ENCODE measurements at regions of chr13 and their contacts with region 1.

Region 1: DNA sequence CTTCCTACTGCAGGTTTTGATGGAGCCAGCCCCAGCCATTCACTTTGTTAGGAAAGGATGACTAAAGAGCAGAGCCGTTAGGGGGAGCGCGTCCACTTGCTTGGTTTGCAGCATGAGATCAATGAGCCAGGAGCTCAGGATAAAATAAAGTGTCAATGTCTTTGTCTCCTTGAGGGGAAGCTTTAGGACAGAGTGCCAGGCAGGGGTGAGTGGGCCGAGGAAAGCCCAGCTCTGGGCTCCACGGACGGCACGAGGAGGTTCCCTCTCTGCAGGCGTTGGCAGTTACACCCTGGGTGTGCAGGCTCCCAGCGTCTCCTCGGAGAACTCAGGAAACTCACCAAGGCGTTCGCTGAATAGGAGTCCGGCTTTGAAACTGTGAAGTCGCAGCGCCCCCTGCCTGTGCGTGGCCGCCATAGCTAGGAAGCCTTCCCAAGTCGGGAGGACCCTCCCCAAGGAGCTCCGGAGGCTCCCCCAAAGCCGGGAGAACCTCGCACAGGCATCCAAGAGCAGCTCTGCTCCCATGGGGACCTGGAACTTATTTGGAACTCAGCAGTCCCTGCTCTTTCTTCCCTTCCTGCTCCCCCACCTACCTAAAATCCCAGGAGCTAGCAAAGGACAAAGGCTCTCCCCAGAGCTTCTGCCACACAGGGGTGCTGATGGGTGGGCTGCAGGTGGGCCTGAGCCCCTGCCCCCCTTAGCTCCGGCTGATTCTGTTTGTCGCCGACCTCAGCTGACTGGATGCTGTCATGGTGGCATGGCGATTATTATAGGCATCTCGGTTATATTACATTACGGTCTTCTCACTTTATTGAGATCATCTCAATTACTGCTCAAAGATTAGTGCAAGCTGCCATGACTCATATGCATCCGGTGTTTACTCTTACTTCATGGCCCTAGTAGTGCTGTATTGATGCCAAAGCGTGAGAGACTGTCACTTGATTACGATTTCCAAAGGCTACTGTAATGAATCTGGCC is 34.4 kb downstream of the GSX1 start:
- DNase-seq: no peak
- H3K4me3 ChIP-seq: peak overlapping the region in 1 of 4 donors; percentile 41
- H3K27ac ChIP-seq: no peak overlapping the region
- H3K4me1 ChIP-seq: peaks cover 0 to 18% (median 6%) of the 10 kb centered on the region in 3 donors
- H3K27me3 ChIP-seq: peaks cover 0 to 92% (median 11%) of the 10 kb centered on the region in 4 donors
- CTCF ChIP-seq: peak; percentile 85 to 96 (median 94)
- POLR2A ChIP-seq: peak in 1 of 4 donors; percentile 5

Region 2: GRCh38 chr13:26971990-26972887 is 854.4 kb before region 1 on chr13:
- intact Hi-C with region 1: loop called (anchors 10 kb)
- DNase-seq: no peak
- H3K4me3 ChIP-seq: no peak overlapping the region
- H3K27ac ChIP-seq: no peak overlapping the region
- H3K4me1 ChIP-seq: peaks cover 0 to 4% (median 0%) of the 10 kb centered on the region in 3 donors
- H3K27me3 ChIP-seq: peaks cover 0 to 53% (median 0%) of the 10 kb centered on the region in 4 donors
- CTCF ChIP-seq: peak in 3 of 6 experiments; percentile 17 to 43 (median 43)
- POLR2A ChIP-seq: no peak

Region 3: GRCh38 chr13:27374650-27375049 is 452.0 kb before region 1 on chr13:
- intact Hi-C with region 1: loop called (anchors 5 kb)
- DNase-seq: no peak
- H3K4me3 ChIP-seq: no peak overlapping the region
- H3K27ac ChIP-seq: no peak overlapping the region
- H3K4me1 ChIP-seq: no peaks in the 10 kb centered on the region
- H3K27me3 ChIP-seq: peaks cover 0 to 55% (median 1%) of the 10 kb centered on the region in 4 donors
- CTCF ChIP-seq: peak; percentile 61 to 78 (median 73)
- POLR2A ChIP-seq: no peak

Region 4: DNA sequence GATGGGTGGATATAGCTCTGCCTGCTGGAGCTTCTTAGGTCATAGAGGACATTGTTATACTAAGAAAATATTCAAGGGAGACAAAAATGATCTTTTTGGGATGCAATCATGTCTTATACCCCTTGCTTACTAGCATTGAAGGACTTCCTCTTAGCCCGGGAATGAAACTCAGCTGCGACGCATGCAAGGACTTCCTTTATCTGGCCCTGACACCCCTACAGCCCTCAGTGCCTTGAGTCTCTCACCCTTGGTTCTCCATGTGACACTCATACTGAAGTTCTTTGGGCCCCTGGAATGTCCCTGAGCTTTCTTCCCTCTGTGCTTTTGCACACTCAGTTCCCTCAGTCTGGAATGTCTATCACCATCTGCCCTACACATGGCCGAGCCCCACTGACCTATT is 303.8 kb before region 1 on chr13:
- intact Hi-C with region 1: no loop called
- DNase-seq: no peak
- H3K4me3 ChIP-seq: no peak overlapping the region
- H3K27ac ChIP-seq: no peak overlapping the region
- H3K4me1 ChIP-seq: no peaks in the 10 kb centered on the region
- H3K27me3 ChIP-seq: peaks cover 0 to 9% (median 0%) of the 10 kb centered on the region in 4 donors
- CTCF ChIP-seq: no peak
- POLR2A ChIP-seq: no peak

Region 5: DNA sequence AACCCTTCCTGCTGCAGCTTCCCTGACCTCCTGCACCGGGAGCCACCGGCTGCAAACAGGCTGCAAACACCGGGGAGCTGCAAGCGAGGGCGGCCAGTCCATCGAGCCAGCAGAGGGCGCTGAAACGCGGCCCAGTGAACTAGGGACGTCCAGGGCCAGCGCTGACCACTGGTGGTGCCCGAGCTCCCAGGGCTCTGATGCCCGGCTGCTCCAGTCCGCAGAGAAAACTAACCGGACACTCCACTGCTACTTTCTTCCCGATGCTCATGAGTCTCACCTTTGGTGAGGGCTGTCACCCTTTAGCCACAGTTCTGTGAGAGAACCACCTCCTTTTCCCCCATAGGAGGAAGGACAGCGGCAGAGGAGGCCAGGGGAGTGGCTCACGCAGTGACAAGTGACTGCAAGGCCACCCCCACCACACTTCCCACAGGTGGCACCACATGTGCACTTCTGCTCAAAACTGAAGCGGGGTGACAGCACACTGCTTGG is 293.5 kb before region 1 on chr13:
- intact Hi-C with region 1: loop called (anchors 10 kb)
- DNase-seq: no peak
- H3K4me3 ChIP-seq: peak overlapping the region in 1 of 4 donors; percentile 40
- H3K27ac ChIP-seq: no peak overlapping the region
- H3K4me1 ChIP-seq: peaks cover 0 to 7% (median 0%) of the 10 kb centered on the region in 3 donors
- H3K27me3 ChIP-seq: no peaks in the 10 kb centered on the region
- CTCF ChIP-seq: peak; percentile 70 to 89 (median 82)
- POLR2A ChIP-seq: no peak

Region 6: DNA sequence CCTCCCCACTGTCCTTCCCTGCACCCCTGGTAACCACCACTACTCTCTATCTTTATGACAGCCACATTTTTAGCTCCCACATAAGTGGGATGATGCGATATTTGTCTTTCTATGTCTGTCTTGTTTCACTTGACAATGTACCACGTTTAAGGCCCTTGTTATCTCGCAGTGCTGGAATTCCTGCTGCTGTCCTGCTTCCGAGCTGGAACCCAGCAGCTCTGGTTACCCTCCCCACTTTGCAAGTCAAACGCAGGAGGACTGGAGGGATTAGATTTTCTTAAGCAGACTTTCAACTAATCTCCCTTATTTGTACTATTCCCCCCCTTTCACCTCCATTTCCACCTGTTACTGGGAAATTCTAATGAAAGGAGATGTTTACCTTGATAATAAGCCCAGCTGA is 34.1 kb after region 1 on chr13:
- intact Hi-C with region 1: no loop called
- DNase-seq: no peak
- H3K4me3 ChIP-seq: no peak overlapping the region
- H3K27ac ChIP-seq: no peak overlapping the region
- H3K4me1 ChIP-seq: no peaks in the 10 kb centered on the region
- H3K27me3 ChIP-seq: peaks cover 0 to 95% (median 0%) of the 10 kb centered on the region in 4 donors
- CTCF ChIP-seq: no peak
- POLR2A ChIP-seq: no peak

Region 7: GRCh38 chr13:27977476-27978300 is 151.0 kb after region 1 on chr13:
- intact Hi-C with region 1: loop called (anchors 5 kb)
- DNase-seq: no peak
- H3K4me3 ChIP-seq: peak overlapping the region in 1 of 4 donors; percentile 19
- H3K27ac ChIP-seq: no peak overlapping the region
- H3K4me1 ChIP-seq: peaks cover 11 to 44% (median 16%) of the 10 kb centered on the region in 3 donors
- H3K27me3 ChIP-seq: peaks cover 8 to 100% (median 36%) of the 10 kb centered on the region in 4 donors
- CTCF ChIP-seq: no peak
- POLR2A ChIP-seq: no peak